GM12878 (cell line): ENCODE measurements at regions of chr15 and their contacts with region 1.

Region 1: GRCh38 chr15:23912191-23912590 is 225.1 kb upstream of the NDN start:
- DNase-seq: no peak
- ATAC-seq: no peak
- H3K4me3 ChIP-seq: no peak overlapping the region
- H3K27ac ChIP-seq: no peak overlapping the region
- H3K4me1 ChIP-seq: no peaks in the 10 kb centered on the region
- H3K27me3 ChIP-seq: no peaks in the 10 kb centered on the region
- CTCF ChIP-seq: no peak
- EP300 ChIP-seq: no peak
- POLR2A ChIP-seq: no peak
- RAD21 ChIP-seq: no peak

Region 2: DNA sequence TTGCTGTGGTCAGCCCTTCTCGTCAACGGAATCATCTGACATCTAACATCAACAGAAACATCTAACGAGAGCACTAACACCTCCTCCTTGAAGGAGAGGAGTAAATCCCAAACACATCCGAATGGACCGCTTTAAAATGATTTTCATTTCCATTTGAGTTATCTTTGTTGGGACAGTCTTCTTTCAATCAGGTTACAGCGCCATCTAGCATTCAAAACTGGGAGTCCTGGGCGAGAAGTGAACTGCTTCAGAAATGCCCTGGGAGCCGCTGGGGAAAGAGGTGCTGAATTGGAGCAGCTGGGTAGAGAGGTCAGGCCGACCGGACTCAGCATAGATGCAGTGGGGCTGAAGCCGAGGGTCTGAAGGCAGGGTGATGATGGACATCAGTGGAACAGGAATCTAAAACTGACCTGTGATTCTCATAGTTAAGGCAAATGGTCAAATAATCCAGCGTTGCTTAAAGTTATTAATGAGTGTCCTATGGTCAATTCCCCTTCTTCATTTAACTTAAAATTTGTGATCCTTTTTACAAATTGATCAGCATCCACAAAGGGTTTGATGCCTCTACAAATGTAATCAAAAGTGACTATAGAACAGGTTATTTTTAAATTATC is 55.1 kb before region 1 on chr15:
- CTCF ChIA-PET with region 1: no interaction called
- POLR2A ChIA-PET with region 1: no interaction called
- RAD21 ChIA-PET with region 1: no interaction called
- SMC1A ChIA-PET with region 1: no interaction called
- in situ Hi-C with region 1: loop called (anchors 10 kb)
- intact Hi-C with region 1: loop called (anchors 10 kb)
- DNase-seq: no peak
- ATAC-seq: no peak
- H3K4me3 ChIP-seq: no peak overlapping the region
- H3K27ac ChIP-seq: no peak overlapping the region
- H3K4me1 ChIP-seq: no peaks in the 10 kb centered on the region
- H3K27me3 ChIP-seq: no peaks in the 10 kb centered on the region
- CTCF ChIP-seq: no peak
- EP300 ChIP-seq: no peak
- POLR2A ChIP-seq: no peak
- RAD21 ChIP-seq: no peak

Region 3: DNA sequence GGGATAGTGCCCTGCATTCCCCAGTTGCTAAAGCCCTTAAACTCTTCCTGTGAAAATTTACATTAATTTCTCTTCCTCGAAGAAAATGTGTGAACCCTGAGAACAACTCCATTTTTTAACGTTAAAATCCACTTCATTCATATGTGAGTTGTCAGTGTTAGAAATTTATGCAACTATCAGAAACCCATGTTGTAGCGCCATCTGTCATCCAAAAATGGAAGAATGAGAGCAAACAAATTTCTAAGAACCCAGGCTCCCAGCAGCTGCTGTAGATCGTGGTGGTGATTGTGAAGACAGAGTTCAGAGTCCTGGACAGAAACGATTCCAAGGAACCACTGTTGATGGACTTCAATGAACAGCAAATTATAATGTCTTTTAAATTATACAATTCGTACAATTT is 45.4 kb before region 1 on chr15:
- CTCF ChIA-PET with region 1: no interaction called
- POLR2A ChIA-PET with region 1: no interaction called
- RAD21 ChIA-PET with region 1: no interaction called
- SMC1A ChIA-PET with region 1: no interaction called
- in situ Hi-C with region 1: loop called (anchors 10 kb)
- intact Hi-C with region 1: no loop called
- DNase-seq: no peak
- ATAC-seq: no peak
- H3K4me3 ChIP-seq: no peak overlapping the region
- H3K27ac ChIP-seq: no peak overlapping the region
- H3K4me1 ChIP-seq: no peaks in the 10 kb centered on the region
- H3K27me3 ChIP-seq: no peaks in the 10 kb centered on the region
- CTCF ChIP-seq: no peak
- EP300 ChIP-seq: no peak
- POLR2A ChIP-seq: no peak
- RAD21 ChIP-seq: no peak